Mammary epithelial cell (primary cell): ENCODE measurements at regions of chr10 and their contacts with region 1.

Region 1: GRCh38 chr10:98994030-98994429 is 241.6 kb downstream of the HPSE2 start:
- DNase-seq: no peak
- H3K4me3 ChIP-seq: no peak overlapping the region
- H3K27ac ChIP-seq: no peak overlapping the region
- H3K4me1 ChIP-seq: no peaks in the 10 kb centered on the region
- H3K27me3 ChIP-seq: no peaks in the 10 kb centered on the region
- CTCF ChIP-seq: no peak

Region 2: GRCh38 chr10:98795467-98795866 is 198.6 kb before region 1 on chr10:
- CTCF ChIA-PET with region 1: no interaction called
- dilution Hi-C with region 1: no loop called
- in situ Hi-C with region 1: no loop called
- intact Hi-C with region 1: no loop called
- DNase-seq: no peak
- H3K4me3 ChIP-seq: no peak overlapping the region
- H3K27ac ChIP-seq: no peak overlapping the region
- H3K4me1 ChIP-seq: no peaks in the 10 kb centered on the region
- H3K27me3 ChIP-seq: no peaks in the 10 kb centered on the region
- CTCF ChIP-seq: no peak

Region 3: GRCh38 chr10:99057936-99058690 is 64.1 kb after region 1 on chr10:
- CTCF ChIA-PET with region 1: no interaction called
- dilution Hi-C with region 1: loop called (anchors 5 kb)
- in situ Hi-C with region 1: no loop called
- intact Hi-C with region 1: no loop called
- DNase-seq: no peak
- H3K4me3 ChIP-seq: no peak overlapping the region
- H3K27ac ChIP-seq: no peak overlapping the region
- H3K4me1 ChIP-seq: no peaks in the 10 kb centered on the region
- H3K27me3 ChIP-seq: peaks cover 2% of the 10 kb centered on the region
- CTCF ChIP-seq: no peak

Region 4: GRCh38 chr10:99360934-99361333 is 366.9 kb after region 1 on chr10:
- CTCF ChIA-PET with region 1: no interaction called
- dilution Hi-C with region 1: no loop called
- in situ Hi-C with region 1: no loop called
- intact Hi-C with region 1: no loop called
- DNase-seq: no peak
- H3K4me3 ChIP-seq: no peak overlapping the region
- H3K27ac ChIP-seq: no peak overlapping the region
- H3K4me1 ChIP-seq: no peaks in the 10 kb centered on the region
- H3K27me3 ChIP-seq: no peaks in the 10 kb centered on the region
- CTCF ChIP-seq: no peak